PC-3 (cell line): ENCODE measurements at regions of chr7 and their contacts with region 1.

Region 1: DNA sequence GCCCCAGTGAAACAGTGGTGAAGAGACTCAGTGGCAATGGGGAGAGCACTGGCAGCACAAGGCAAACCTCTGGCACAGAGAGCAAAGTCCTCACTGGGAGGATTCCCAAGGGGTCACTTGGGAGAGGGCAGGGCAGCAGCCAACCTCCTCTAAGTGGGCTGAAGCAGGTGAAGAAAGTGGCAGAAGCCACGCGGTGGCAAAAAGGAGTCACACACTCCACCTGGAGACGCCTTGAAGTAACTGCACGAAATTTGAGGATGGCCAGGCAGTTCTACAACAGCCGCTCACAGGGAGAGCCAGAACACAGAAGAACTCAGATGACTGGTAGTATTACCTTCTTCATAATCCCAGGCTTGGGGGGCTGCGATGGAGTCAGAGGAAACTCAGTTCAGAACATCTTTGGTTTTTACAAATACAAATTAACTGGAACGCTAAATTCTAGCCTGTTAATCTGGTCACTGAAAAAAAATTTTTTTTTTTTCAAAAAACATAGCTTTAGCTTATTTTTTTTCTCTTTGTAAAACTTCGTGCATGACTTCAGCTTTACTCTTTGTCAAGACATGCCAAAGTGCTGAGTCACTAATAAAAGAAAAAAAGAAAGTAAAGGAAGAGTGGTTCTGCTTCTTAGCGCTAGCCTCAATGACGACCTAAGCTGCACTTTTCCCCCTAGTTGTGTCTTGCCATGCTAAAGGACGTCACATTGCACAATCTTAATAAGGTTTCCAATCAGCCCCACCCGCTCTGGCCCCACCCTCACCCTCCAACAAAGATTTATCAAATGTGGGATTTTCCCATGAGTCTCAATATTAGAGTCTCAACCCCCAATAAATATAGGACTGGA is 435 bp upstream of the IL6 start:
- DNase-seq: peak; percentile 92
- ATAC-seq: peak; percentile 69
- H3K4me3 ChIP-seq: peak overlapping the region; percentile 74
- H3K27ac ChIP-seq: peak overlapping the region; percentile 97
- H3K4me1 ChIP-seq: peaks cover 66% of the 10 kb centered on the region
- H3K27me3 ChIP-seq: no peaks in the 10 kb centered on the region
- CTCF ChIP-seq: peak; percentile 76

Region 2: DNA sequence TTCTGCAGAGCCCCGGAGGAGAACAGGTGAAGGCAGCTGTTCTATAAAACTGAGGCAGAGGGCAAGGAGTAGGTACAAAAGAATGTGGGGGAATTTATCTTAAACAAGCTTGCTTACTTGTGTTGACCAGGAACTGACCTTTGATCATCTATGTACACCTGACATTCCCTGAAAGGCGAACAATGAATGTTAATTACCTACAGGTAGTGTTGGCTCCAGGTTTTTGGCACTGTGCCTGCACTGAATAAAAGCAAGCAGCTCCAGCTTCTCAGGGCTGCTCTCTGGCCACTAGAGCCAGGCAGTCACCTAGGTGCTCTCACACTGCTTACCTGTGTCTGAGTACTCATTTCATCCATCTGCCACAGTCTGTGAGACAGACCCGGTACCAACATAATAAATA is 456.6 kb before region 1 on chr7:
- CTCF ChIA-PET with region 1: no interaction called
- POLR2A ChIA-PET with region 1: no interaction called
- intact Hi-C with region 1: no loop called
- DNase-seq: no peak
- ATAC-seq: no peak
- H3K4me3 ChIP-seq: no peak overlapping the region
- H3K27ac ChIP-seq: no peak overlapping the region
- H3K4me1 ChIP-seq: no peaks in the 10 kb centered on the region
- H3K27me3 ChIP-seq: no peaks in the 10 kb centered on the region
- CTCF ChIP-seq: no peak

Region 3: GRCh38 chr7:22559829-22560489 is 166.6 kb before region 1 on chr7:
- CTCF ChIA-PET with region 1: interaction called, 88 read pairs
- POLR2A ChIA-PET with region 1: interaction called, 9 read pairs
- intact Hi-C with region 1: loop called (anchors 1 kb)
- DNase-seq: peak; percentile 86
- ATAC-seq: peak; percentile 55
- H3K4me3 ChIP-seq: no peak overlapping the region
- H3K27ac ChIP-seq: peak overlapping the region; percentile 95
- H3K4me1 ChIP-seq: peaks cover 49% of the 10 kb centered on the region
- H3K27me3 ChIP-seq: no peaks in the 10 kb centered on the region
- CTCF ChIP-seq: peak; percentile 95

Region 4: DNA sequence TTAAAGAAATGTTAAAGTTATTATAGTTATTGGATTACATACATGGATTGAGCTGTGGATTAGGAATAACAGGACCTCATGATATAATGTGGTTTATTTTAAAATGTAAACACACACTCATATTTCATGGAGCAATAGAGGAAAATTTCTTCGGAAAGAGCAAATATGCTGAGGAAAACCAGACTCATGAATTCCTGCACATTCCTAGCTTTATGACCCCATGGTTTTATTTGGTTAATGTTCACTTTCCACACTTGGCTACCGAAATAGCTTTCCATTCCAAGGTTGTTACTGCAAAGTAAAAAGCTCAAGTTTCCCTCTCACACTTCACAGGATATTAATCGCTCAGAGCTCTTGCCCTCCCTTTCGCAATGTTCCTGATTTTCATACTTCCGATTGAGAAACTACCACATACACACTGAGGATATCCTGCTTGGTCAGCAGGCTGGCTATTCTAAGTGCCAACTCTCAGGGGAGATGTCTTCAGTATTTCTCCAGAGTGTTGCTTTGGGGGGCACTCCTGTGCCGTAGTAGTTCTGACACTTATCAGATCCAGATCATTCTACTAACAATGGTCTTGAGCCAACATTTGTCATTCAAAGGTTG is 149.1 kb before region 1 on chr7:
- CTCF ChIA-PET with region 1: interaction called, 32 read pairs
- POLR2A ChIA-PET with region 1: interaction called, 12 read pairs
- intact Hi-C with region 1: loop called (anchors 1 kb)
- DNase-seq: peak; percentile 93
- ATAC-seq: peak; percentile 67
- H3K4me3 ChIP-seq: peak overlapping the region; percentile 24; the same call in 1 of the 2 replicates
- H3K27ac ChIP-seq: peak overlapping the region; percentile 98
- H3K4me1 ChIP-seq: peaks cover 41% of the 10 kb centered on the region
- H3K27me3 ChIP-seq: no peaks in the 10 kb centered on the region
- CTCF ChIP-seq: no peak

Region 5: DNA sequence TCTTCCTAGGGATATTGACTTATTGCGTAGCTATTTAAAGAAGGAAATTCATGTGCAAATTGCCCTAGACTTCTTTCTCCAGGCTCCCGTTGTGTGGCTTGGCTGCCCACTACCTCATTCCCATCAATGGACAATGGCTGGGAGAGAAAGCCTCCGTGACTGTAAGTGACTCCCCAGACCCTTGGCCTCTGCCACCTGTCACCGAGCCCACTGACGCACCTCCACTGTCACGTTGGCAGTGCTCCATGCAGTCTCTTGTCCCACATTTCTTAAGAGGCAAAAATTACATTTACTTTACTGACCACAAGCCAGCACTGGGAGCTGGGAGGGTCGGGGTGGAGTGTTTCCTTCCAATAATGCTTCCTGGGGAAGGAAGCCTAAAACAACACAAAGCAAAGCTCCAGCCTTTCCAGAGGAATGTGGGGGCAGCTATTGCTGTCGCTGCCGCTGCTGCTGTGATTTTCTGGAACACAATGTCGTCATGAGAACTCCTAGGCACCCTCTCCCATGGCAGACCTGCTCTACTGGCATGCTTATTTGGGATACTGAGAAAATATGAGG is 136.8 kb before region 1 on chr7:
- CTCF ChIA-PET with region 1: interaction called, 6 read pairs
- POLR2A ChIA-PET with region 1: interaction called, 11 read pairs
- intact Hi-C with region 1: no loop called
- DNase-seq: peak; percentile 79
- ATAC-seq: peak; percentile 69
- H3K4me3 ChIP-seq: peak overlapping the region; percentile 12; the same call in 1 of the 2 replicates
- H3K27ac ChIP-seq: peak overlapping the region; percentile 83
- H3K4me1 ChIP-seq: peaks cover 40% of the 10 kb centered on the region
- H3K27me3 ChIP-seq: no peaks in the 10 kb centered on the region
- CTCF ChIP-seq: no peak

Region 6: GRCh38 chr7:22667562-22668239 is 58.9 kb before region 1 on chr7:
- CTCF ChIA-PET with region 1: interaction called, 13 read pairs
- POLR2A ChIA-PET with region 1: interaction called, 4 read pairs
- intact Hi-C with region 1: loop called (anchors 1 kb)
- DNase-seq: peak; percentile 93
- ATAC-seq: peak; percentile 80
- H3K4me3 ChIP-seq: peak overlapping the region; percentile 20; the same call in 1 of the 2 replicates
- H3K27ac ChIP-seq: peak overlapping the region; percentile 99
- H3K4me1 ChIP-seq: peaks cover 55% of the 10 kb centered on the region
- H3K27me3 ChIP-seq: no peaks in the 10 kb centered on the region
- CTCF ChIP-seq: no peak

Region 7: DNA sequence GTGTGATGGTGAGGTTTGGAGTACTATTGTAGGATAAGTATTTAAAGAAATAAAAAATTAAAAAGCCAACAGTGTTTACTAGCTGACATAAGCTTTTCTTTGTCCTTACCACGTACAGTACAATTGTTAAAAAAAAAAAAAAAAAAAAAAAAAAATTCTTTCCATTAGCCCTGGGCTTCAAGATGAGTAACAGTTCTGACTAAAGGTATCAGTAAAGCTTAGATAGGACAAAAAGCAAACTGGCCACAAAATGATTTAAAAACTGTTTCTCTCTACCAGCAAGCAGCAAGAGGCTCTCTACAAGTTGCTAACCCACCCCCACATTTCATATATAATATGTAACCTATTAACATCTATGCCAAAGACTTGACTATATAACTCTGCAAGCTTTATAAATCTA is 269.9 kb after region 1 on chr7:
- CTCF ChIA-PET with region 1: interaction called, 12 read pairs
- POLR2A ChIA-PET with region 1: no interaction called
- intact Hi-C with region 1: no loop called
- DNase-seq: no peak
- ATAC-seq: no peak
- H3K4me3 ChIP-seq: no peak overlapping the region
- H3K27ac ChIP-seq: no peak overlapping the region
- H3K4me1 ChIP-seq: no peaks in the 10 kb centered on the region
- H3K27me3 ChIP-seq: no peaks in the 10 kb centered on the region
- CTCF ChIP-seq: no peak

Region 8: DNA sequence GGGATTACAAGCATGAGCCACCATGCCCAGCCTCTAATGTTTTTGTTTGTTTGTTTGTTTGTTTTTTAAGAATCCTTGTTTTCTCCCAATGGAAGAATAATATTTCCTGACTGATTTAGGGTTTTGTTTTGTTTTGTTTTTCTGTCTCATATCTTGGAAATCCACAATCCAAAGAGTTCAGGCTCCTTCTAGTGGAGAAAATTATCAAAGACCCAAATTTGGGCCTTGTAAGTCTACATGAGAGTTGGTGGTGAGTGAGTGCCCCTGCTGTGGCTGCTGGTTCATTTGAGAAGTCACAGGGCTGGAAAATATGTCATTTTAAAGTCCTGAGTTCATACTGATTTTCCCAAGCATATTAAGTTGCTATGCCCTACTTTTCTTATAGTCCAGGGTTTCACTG is 345.5 kb after region 1 on chr7:
- CTCF ChIA-PET with region 1: no interaction called
- POLR2A ChIA-PET with region 1: no interaction called
- intact Hi-C with region 1: loop called (anchors 5 kb)
- DNase-seq: peak; percentile 24
- ATAC-seq: 0 out of 2 replicates have a peak, but pooled peaks have one; percentile 25
- H3K4me3 ChIP-seq: no peak overlapping the region
- H3K27ac ChIP-seq: no peak overlapping the region
- H3K4me1 ChIP-seq: peaks cover 21% of the 10 kb centered on the region
- H3K27me3 ChIP-seq: no peaks in the 10 kb centered on the region
- CTCF ChIP-seq: peak; percentile 44; the same call in 1 of the 2 replicates

Region 9: DNA sequence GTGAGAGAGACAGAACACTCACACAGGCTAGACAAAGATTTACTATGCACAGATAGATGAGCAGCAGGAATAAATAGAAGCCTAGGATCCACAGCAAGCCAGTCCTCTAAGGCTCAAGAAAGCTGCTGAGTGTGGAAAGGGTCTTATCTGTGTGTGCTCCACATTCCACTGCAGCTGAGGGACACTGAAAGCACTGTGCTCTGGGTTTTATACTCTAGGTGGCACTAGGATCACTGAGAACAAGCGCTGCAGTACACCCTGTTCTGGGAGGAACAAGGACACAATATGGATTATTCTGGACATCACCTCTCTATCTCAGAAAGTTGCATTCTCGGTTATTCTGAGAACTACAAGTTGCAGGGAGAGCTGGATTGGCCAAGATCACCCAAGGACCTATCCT is 374.1 kb after region 1 on chr7:
- CTCF ChIA-PET with region 1: no interaction called
- POLR2A ChIA-PET with region 1: no interaction called
- intact Hi-C with region 1: no loop called
- DNase-seq: no peak
- ATAC-seq: no peak
- H3K4me3 ChIP-seq: no peak overlapping the region
- H3K27ac ChIP-seq: no peak overlapping the region
- H3K4me1 ChIP-seq: peaks cover 3% of the 10 kb centered on the region; the same call in 1 of the 2 replicates
- H3K27me3 ChIP-seq: no peaks in the 10 kb centered on the region
- CTCF ChIP-seq: peak; percentile 25; the same call in 1 of the 2 replicates